CD8-positive, alpha-beta memory T cell (primary cell): ENCODE measurements at regions of chr3 and their contacts with region 1.

Region 1: GRCh38 chr3:14921078-14921616 is 26.2 kb upstream of the NR2C2 start:
- DNase-seq: peak; percentile 68 to 86 (median 70)
- H3K4me3 ChIP-seq: no peak overlapping the region
- H3K4me3 Mint-ChIP-seq: no peak overlapping the region
- H3K27ac ChIP-seq: no peak overlapping the region
- H3K27ac Mint-ChIP-seq: peak overlapping the region in 1 of 8 donors; percentile 65
- H3K4me1 ChIP-seq: peaks cover 4% of the 10 kb centered on the region
- H3K4me1 Mint-ChIP-seq: peaks cover 0 to 2% (median 0%) of the 10 kb centered on the region in 3 donors
- H3K27me3 ChIP-seq: no peaks in the 10 kb centered on the region
- H3K27me3 Mint-ChIP-seq: peaks cover 9 to 15% of the 10 kb centered on the region in 2 donors

Region 2: DNA sequence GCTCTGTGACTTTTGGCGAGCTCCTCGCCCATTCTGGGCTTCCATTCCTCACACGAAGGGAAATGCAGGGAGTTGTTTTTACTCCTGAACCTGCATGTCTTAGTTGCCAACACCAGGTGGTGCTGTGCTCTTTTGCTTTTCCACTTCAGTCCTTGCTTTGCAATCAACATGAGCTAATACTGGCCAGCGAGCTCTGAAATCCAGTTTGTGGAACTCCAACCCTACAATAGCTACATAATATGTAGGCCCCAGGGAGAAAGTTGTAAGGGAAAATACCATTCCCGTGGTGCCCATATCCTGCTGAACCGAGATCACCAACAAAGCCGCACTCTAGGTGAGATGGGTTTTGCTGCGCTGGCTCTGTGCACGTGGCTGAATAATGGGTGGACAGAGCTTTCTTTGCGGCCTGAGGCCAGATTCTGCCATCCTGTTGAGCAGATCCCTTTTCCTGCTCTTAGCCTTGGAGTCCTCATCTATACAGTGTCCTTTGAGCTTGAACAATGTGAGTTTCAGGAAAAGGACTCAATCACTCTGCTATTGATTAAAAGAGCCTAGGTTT is 717.5 kb before region 1 on chr3:
- CTCF ChIA-PET with region 1: interaction called, 15 read pairs
- POLR2A ChIA-PET with region 1: no interaction called
- DNase-seq: peak in 4 of 5 donors; percentile 10 to 62 (median 24)
- H3K4me3 ChIP-seq: no peak overlapping the region
- H3K4me3 Mint-ChIP-seq: no peak overlapping the region
- H3K27ac ChIP-seq: no peak overlapping the region
- H3K27ac Mint-ChIP-seq: peak overlapping the region in 2 of 8 donors; percentile 42 to 49
- H3K4me1 ChIP-seq: no peaks in the 10 kb centered on the region
- H3K4me1 Mint-ChIP-seq: peaks cover 5 to 6% (median 5%) of the 10 kb centered on the region in 3 donors
- H3K27me3 ChIP-seq: no peaks in the 10 kb centered on the region
- H3K27me3 Mint-ChIP-seq: no peaks in the 10 kb centered on the region

Region 3: DNA sequence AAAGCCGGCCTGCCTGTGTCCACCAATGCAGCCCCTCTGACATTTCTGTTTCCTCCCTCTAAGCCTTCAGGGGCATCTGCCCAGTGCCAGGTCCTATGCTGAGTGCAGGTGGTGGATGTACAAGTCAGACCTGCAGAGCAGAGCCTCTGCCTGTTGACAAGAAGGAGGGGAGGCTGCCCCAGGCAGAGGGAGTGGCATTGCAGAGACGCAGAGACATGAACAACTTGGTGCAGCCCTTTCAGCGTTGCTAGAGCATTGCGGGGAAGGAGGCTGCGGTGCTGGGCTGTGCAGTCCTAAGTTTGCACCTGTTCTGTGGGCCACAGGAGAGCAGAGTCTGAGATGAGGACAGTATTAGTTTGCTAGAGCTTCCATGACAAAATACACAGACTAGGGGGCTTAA is 677.4 kb before region 1 on chr3:
- CTCF ChIA-PET with region 1: no interaction called
- POLR2A ChIA-PET with region 1: no interaction called
- DNase-seq: no peak
- H3K4me3 ChIP-seq: no peak overlapping the region
- H3K4me3 Mint-ChIP-seq: no peak overlapping the region
- H3K27ac ChIP-seq: no peak overlapping the region
- H3K27ac Mint-ChIP-seq: peak overlapping the region in 1 of 8 donors; percentile 85
- H3K4me1 ChIP-seq: no peaks in the 10 kb centered on the region
- H3K4me1 Mint-ChIP-seq: no peaks in the 10 kb centered on the region
- H3K27me3 ChIP-seq: no peaks in the 10 kb centered on the region
- H3K27me3 Mint-ChIP-seq: peaks cover 6 to 21% of the 10 kb centered on the region in 2 donors

Region 4: DNA sequence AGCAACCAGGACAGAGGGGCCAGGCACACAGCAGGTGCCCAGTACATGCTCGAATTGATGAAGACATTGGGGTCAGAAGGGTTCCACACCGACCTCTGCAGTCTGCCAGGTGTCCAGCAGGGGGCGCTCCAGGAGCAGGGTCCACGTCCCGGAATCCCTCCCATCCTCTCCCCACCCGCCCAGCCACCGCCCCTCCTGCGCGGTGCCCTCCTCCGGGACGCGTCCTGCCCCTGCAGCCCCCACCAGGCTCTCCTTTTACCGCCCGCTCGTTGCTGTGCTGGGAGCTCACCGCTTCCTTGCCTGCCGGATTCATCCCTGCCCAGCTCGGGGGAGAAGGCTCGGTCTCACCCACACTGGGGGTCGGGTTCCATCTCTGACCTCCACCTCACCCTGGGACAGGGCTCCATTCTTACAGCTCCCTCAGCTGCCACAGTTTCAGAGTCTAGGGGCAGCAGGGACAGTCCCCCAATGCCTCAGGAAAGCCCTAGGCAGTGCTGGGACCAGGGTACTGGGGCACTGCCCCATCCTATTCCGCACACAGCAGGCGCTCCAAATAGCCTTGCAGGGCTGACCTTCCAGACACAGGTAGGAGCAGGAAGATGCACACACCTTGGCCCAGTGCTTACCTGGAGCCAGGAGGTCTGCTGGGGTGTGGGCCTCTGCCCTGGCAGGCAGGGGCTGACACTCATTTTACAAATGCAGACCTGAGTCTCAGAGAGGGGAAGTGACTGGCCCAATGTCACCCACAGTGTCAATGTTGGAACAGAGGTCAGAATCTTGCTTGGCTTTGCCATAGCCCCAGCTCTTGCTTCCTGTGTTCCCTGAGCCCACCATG is 412.0 kb before region 1 on chr3:
- CTCF ChIA-PET with region 1: interaction called, 10 read pairs
- POLR2A ChIA-PET with region 1: no interaction called
- DNase-seq: peak; percentile 7 to 73 (median 54)
- H3K4me3 ChIP-seq: no peak overlapping the region
- H3K4me3 Mint-ChIP-seq: peak overlapping the region in 1 of 7 donors; percentile 48
- H3K27ac ChIP-seq: no peak overlapping the region
- H3K27ac Mint-ChIP-seq: peak overlapping the region in 2 of 8 donors; percentile 18 to 82
- H3K4me1 ChIP-seq: no peaks in the 10 kb centered on the region
- H3K4me1 Mint-ChIP-seq: peaks cover 0 to 10% (median 9%) of the 10 kb centered on the region in 3 donors
- H3K27me3 ChIP-seq: no peaks in the 10 kb centered on the region
- H3K27me3 Mint-ChIP-seq: peaks cover 4 to 6% of the 10 kb centered on the region in 2 donors

Region 5: GRCh38 chr3:14631687-14632441 is 289.3 kb before region 1 on chr3:
- CTCF ChIA-PET with region 1: interaction called, 12 read pairs
- POLR2A ChIA-PET with region 1: no interaction called
- DNase-seq: no peak
- H3K4me3 ChIP-seq: no peak overlapping the region
- H3K4me3 Mint-ChIP-seq: no peak overlapping the region
- H3K27ac ChIP-seq: no peak overlapping the region
- H3K27ac Mint-ChIP-seq: peak overlapping the region in 1 of 8 donors; percentile 66
- H3K4me1 ChIP-seq: no peaks in the 10 kb centered on the region
- H3K4me1 Mint-ChIP-seq: no peaks in the 10 kb centered on the region
- H3K27me3 ChIP-seq: no peaks in the 10 kb centered on the region
- H3K27me3 Mint-ChIP-seq: peaks cover 12 to 48% of the 10 kb centered on the region in 2 donors

Region 6: DNA sequence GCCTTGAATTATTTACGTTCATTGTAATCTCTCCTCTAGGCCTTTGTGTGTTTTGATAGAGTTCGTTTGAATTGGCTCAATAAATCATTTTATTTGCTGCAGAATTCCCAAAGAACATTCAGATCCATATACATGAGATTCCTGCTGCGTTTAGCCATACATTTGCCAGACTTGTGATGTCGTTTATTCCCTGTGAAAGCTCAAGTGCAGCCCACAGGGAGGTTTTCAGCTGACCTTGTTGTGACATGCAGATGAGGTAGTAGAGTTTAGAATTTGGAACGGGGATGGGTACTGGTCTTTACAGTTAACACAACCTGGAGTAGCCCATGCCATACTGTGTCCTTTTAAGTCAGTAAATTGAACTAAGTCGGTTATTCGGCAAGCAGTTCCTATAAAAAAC is 246.3 kb before region 1 on chr3 and contains the start of gene C3orf20:
- CTCF ChIA-PET with region 1: interaction called, 14 read pairs
- POLR2A ChIA-PET with region 1: no interaction called
- DNase-seq: no peak
- H3K4me3 ChIP-seq: no peak within 1 kb of the TSS
- H3K4me3 Mint-ChIP-seq: no peak within 1 kb of the TSS
- H3K27ac ChIP-seq: no peak within 1 kb of the TSS
- H3K27ac Mint-ChIP-seq: peak within 1 kb of the TSS in 3 of 8 donors; percentile 0 to 50 (median 10)
- H3K4me1 ChIP-seq: no peaks in the 10 kb centered on the region
- H3K4me1 Mint-ChIP-seq: no peaks in the 10 kb centered on the region
- H3K27me3 ChIP-seq: no peaks in the 10 kb centered on the region
- H3K27me3 Mint-ChIP-seq: no peaks in the 10 kb centered on the region
- total RNA-seq, gene C3orf20: 0.07 to 0.18 TPM

Region 7: GRCh38 chr3:14947886-14948555 is 26.9 kb after region 1 on chr3:
- CTCF ChIA-PET with region 1: interaction called, 10 read pairs
- POLR2A ChIA-PET with region 1: no interaction called
- DNase-seq: peak; percentile 94 to 97 (median 96)
- H3K4me3 ChIP-seq: peak overlapping the region; percentile 94
- H3K4me3 Mint-ChIP-seq: peak overlapping the region; percentile 98 to 100 (median 100)
- H3K27ac ChIP-seq: peak overlapping the region; percentile 94
- H3K27ac Mint-ChIP-seq: peak overlapping the region; percentile 93 to 100 (median 100)
- H3K4me1 ChIP-seq: peaks cover 33% of the 10 kb centered on the region
- H3K4me1 Mint-ChIP-seq: peaks cover 52 to 84% (median 59%) of the 10 kb centered on the region in 3 donors
- H3K27me3 ChIP-seq: no peaks in the 10 kb centered on the region
- H3K27me3 Mint-ChIP-seq: no peaks in the 10 kb centered on the region